IMR-90 (cell line): ENCODE measurements at regions of chr12 and their contacts with region 1.

Region 1: DNA sequence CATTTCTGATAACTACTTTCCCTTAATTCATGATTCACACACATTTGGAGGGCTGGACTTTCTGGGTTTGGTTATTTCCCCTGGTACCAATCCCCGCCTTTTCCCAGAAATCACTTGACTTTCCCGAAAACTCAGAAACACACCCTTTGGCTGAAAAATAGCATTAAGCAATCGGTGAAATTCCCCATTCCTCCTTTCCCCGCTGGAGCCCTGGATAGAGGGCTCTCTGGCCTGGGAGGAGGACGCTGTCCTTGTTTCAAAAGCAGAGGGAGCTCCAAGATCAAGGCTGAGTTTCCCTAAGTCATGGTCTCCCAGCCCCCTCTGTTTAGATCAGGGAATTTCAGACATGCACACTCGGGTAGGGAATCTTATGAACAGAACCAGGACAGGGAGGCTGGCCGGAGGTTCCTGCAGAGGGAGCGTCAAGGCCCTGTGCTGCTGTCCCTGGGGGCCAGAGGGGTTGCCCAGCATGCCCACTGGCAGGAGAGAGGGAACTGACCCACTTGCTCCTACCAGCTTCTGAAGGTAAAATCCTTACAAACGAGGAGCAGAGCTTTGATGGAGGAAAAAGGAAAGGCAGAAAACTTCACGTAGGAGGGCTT is at the start of gene C1S:
- DNase-seq: peak; percentile 99
- ATAC-seq: peak; percentile 99
- H3K4me3 ChIP-seq: peak within 1 kb of the TSS; percentile 44
- H3K27ac ChIP-seq: peak within 1 kb of the TSS; percentile 90
- H3K4me1 ChIP-seq: peaks cover 7% of the 10 kb centered on the region
- H3K27me3 ChIP-seq: peaks cover 2% of the 10 kb centered on the region
- CTCF ChIP-seq: peak; percentile 99
- POLR2A ChIP-seq: peak; percentile 70
- RAD21 ChIP-seq: peak; percentile 99
- total RNA-seq, gene C1S: 34.4 and 49.6 TPM in 2 replicates

Region 2: DNA sequence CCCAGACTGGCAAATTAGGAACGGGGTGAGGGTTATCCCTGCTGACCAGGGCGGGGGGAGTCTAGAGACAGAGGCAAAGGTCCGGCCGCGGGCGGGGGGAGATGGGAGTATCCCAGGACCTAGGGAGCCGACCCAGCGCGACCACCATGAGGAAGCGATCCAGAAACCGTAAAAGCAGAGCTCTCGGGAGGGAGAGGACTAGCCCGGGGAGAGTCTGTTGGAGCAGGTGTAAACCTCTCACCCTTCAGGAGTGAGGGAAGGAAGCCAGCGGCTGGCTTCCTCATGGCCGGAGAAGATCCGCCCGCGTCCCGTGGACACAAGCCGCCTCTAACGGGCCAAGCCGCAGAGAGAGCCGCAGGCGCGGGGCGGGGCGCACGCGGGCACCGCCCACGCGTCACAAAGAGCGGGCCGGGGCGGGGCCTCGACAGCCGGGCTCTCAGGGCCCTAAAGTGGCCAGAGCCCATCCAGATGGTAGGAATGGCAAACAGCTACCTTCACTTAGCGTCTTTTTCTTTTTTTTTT is 413.3 kb before region 1 on chr12 and contains the start of gene ACRBP:
- CTCF ChIA-PET with region 1: no interaction called
- POLR2A ChIA-PET with region 1: no interaction called
- dilution Hi-C with region 1: no loop called
- in situ Hi-C with region 1: no loop called
- intact Hi-C with region 1: no loop called
- DNase-seq: peak; percentile 14
- ATAC-seq: peak; percentile 91
- H3K4me3 ChIP-seq: peak within 1 kb of the TSS; percentile 38; the same call in 1 of the 2 replicates
- H3K27ac ChIP-seq: no peak within 1 kb of the TSS
- H3K4me1 ChIP-seq: no peaks in the 10 kb centered on the region
- H3K27me3 ChIP-seq: no peaks in the 10 kb centered on the region
- CTCF ChIP-seq: no peak
- POLR2A ChIP-seq: no peak
- RAD21 ChIP-seq: no peak
- total RNA-seq, gene ACRBP: not detected in 2 replicates

Region 3: GRCh38 chr12:7092229-7092985 is 32.0 kb after region 1 on chr12 and contains the start of gene C1R:
- CTCF ChIA-PET with region 1: interaction called, 5 read pairs
- POLR2A ChIA-PET with region 1: interaction called, 3 read pairs
- dilution Hi-C with region 1: no loop called
- in situ Hi-C with region 1: no loop called
- intact Hi-C with region 1: loop called (anchors 1 kb)
- DNase-seq: peak; percentile 92
- ATAC-seq: peak; percentile 94
- H3K4me3 ChIP-seq: peak within 1 kb of the TSS; percentile 55
- H3K27ac ChIP-seq: peak within 1 kb of the TSS; percentile 84
- H3K4me1 ChIP-seq: peaks cover 26% of the 10 kb centered on the region
- H3K27me3 ChIP-seq: no peaks in the 10 kb centered on the region
- CTCF ChIP-seq: peak; percentile 94
- POLR2A ChIP-seq: no peak
- RAD21 ChIP-seq: peak; percentile 85
- total RNA-seq, gene C1R: 19.4 and 38.4 TPM in 2 replicates

Region 4: GRCh38 chr12:7108796-7109571 is 48.5 kb after region 1 on chr12 and contains the start of gene C1RL:
- CTCF ChIA-PET with region 1: interaction called, 9 read pairs
- POLR2A ChIA-PET with region 1: interaction called, 3 read pairs
- dilution Hi-C with region 1: no loop called
- in situ Hi-C with region 1: loop called (anchors 5 kb)
- intact Hi-C with region 1: loop called (anchors 1 kb)
- DNase-seq: peak; percentile 77
- ATAC-seq: peak; percentile 58
- H3K4me3 ChIP-seq: peak within 1 kb of the TSS; percentile 66
- H3K27ac ChIP-seq: peak within 1 kb of the TSS; percentile 97
- H3K4me1 ChIP-seq: peaks cover 5% of the 10 kb centered on the region; the same call in 1 of the 2 replicates
- H3K27me3 ChIP-seq: no peaks in the 10 kb centered on the region
- CTCF ChIP-seq: peak; percentile 93
- POLR2A ChIP-seq: peak; percentile 15; the same call in 1 of the 2 replicates
- RAD21 ChIP-seq: peak; percentile 79
- total RNA-seq, gene C1RL: 7.5 and 9.1 TPM in 2 replicates

Region 5: GRCh38 chr12:7142056-7142644 is 81.7 kb after region 1 on chr12:
- CTCF ChIA-PET with region 1: interaction called, 6 read pairs
- POLR2A ChIA-PET with region 1: no interaction called
- dilution Hi-C with region 1: no loop called
- in situ Hi-C with region 1: no loop called
- intact Hi-C with region 1: loop called (anchors 1 kb)
- DNase-seq: peak; percentile 39
- ATAC-seq: peak; percentile 91
- H3K4me3 ChIP-seq: no peak overlapping the region
- H3K27ac ChIP-seq: no peak overlapping the region
- H3K4me1 ChIP-seq: peaks cover 2% of the 10 kb centered on the region; the same call in 1 of the 2 replicates
- H3K27me3 ChIP-seq: no peaks in the 10 kb centered on the region
- CTCF ChIP-seq: peak; percentile 71
- POLR2A ChIP-seq: no peak
- RAD21 ChIP-seq: peak; percentile 58

Region 6: GRCh38 chr12:7188562-7189397 is 128.3 kb after region 1 on chr12:
- CTCF ChIA-PET with region 1: no interaction called
- POLR2A ChIA-PET with region 1: no interaction called
- dilution Hi-C with region 1: no loop called
- in situ Hi-C with region 1: no loop called
- intact Hi-C with region 1: loop called (anchors 1 kb)
- DNase-seq: peak; percentile 82
- ATAC-seq: peak; percentile 58
- H3K4me3 ChIP-seq: peak overlapping the region; percentile 69
- H3K27ac ChIP-seq: peak overlapping the region; percentile 76
- H3K4me1 ChIP-seq: peaks cover 7% of the 10 kb centered on the region
- H3K27me3 ChIP-seq: no peaks in the 10 kb centered on the region
- CTCF ChIP-seq: peak; percentile 73
- POLR2A ChIP-seq: peak; percentile 29
- RAD21 ChIP-seq: peak; percentile 72

Region 7: GRCh38 chr12:7219599-7220243 is 159.3 kb after region 1 on chr12:
- CTCF ChIA-PET with region 1: no interaction called
- POLR2A ChIA-PET with region 1: no interaction called
- dilution Hi-C with region 1: no loop called
- in situ Hi-C with region 1: no loop called
- intact Hi-C with region 1: loop called (anchors 1 kb)
- DNase-seq: peak; percentile 73
- ATAC-seq: peak; percentile 82
- H3K4me3 ChIP-seq: no peak overlapping the region
- H3K27ac ChIP-seq: no peak overlapping the region
- H3K4me1 ChIP-seq: no peaks in the 10 kb centered on the region
- H3K27me3 ChIP-seq: peaks cover 9% of the 10 kb centered on the region
- CTCF ChIP-seq: peak; percentile 97
- POLR2A ChIP-seq: 0 out of 2 replicates have a peak, but pooled peaks have one; percentile 44
- RAD21 ChIP-seq: peak; percentile 99

Region 8: DNA sequence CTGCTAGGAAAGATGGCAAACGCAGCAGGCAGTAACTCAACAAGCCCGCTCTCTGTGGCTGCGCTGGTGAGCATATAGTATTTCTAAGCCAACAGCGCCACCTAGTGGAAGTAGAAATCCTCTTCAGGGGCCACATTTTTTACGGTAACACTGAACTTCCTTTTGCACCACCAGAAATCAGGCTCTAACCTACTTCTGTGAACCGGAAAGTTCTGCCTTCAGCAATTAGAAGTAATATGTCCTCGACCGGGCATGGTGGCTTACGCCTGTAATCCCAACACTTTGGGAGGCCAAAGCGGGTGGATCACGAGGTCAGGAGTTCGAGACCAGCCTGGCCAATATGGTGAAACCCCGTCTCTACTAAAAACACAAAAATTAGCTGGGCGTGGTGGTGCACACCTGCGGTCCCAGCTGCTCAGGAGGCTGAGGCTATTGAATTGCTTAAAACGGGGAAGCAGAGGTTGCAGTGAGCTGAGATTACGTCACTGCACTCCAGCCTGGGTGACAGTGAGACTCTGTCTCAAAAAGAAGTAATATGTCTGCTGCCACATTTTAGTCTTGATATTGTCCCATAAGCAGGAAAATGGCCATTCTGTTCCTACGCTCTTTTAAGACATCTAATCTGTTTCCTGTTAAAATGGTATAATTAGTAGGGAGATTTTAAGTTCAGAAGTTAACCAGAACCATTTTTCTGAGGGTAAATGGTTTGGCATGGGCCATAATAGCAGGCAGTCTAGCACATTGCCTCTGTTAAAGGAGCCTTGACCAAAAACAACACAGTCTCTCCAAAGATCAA is 578.5 kb after region 1 on chr12:
- CTCF ChIA-PET with region 1: no interaction called
- POLR2A ChIA-PET with region 1: no interaction called
- dilution Hi-C with region 1: no loop called
- in situ Hi-C with region 1: loop called (anchors 25 kb)
- intact Hi-C with region 1: loop called (anchors 2 kb)
- DNase-seq: peak; percentile 76
- ATAC-seq: peak; percentile 95
- H3K4me3 ChIP-seq: no peak overlapping the region
- H3K27ac ChIP-seq: no peak overlapping the region
- H3K4me1 ChIP-seq: no peaks in the 10 kb centered on the region
- H3K27me3 ChIP-seq: peaks cover 3% of the 10 kb centered on the region
- CTCF ChIP-seq: peak; percentile 94
- POLR2A ChIP-seq: no peak
- RAD21 ChIP-seq: peak; percentile 96

Region 9: GRCh38 chr12:8088574-8088973 is 1028.1 kb after region 1 on chr12:
- CTCF ChIA-PET with region 1: no interaction called
- POLR2A ChIA-PET with region 1: no interaction called
- dilution Hi-C with region 1: no loop called
- in situ Hi-C with region 1: no loop called
- intact Hi-C with region 1: no loop called
- DNase-seq: no peak
- ATAC-seq: no peak
- H3K4me3 ChIP-seq: no peak overlapping the region
- H3K27ac ChIP-seq: no peak overlapping the region
- H3K4me1 ChIP-seq: no peaks in the 10 kb centered on the region
- H3K27me3 ChIP-seq: no peaks in the 10 kb centered on the region
- CTCF ChIP-seq: no peak
- POLR2A ChIP-seq: no peak
- RAD21 ChIP-seq: no peak